Posterior vena cava (tissue), 2 donors: ENCODE measurements at regions of chr1 and their contacts with region 1.

Region 1: DNA sequence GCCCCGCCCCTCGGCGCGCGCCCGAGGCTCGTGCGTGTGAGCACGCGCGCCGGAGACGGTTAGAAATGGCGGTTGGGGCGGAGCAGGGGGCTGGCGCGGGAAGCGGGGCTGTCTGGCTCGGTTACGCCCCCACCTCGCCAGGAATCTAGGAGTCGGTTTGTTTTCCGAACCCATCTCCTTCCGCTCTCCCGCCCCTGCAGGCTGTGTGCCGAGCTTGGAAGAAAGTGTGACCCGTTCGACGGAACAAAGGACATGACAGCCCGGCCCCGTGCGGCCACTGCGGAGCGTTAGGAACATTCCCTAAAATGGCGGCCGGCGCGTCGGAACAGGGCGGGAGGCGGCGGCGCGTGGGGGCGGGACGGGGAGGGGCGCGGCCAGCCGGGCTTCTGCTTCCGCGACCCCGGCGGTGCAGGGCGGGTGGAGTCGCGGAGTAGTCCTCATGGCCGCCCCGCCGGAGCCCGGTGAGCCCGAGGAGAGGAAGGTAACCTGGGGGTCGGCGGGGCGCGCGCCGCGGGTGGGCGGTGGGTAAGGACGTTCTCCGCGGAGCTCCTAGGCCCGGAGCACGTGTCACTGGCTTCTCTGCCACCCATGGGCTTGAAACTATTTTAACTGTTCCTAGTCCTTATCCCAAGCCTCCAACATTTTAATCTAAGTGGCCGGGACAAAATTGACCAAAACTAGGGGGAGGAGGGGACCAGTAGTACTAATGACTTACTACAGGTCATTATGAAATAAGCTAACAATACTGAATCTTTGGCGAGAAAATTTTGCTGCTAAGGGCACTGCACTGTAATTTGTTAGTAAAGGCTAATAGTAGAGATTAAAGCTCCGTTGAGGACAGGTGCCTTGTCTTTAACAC is at the start of gene COX20:
- DNase-seq: peak; percentile 97
- total RNA-seq, gene COX20: 42.1 to 47.6 TPM

Region 2: DNA sequence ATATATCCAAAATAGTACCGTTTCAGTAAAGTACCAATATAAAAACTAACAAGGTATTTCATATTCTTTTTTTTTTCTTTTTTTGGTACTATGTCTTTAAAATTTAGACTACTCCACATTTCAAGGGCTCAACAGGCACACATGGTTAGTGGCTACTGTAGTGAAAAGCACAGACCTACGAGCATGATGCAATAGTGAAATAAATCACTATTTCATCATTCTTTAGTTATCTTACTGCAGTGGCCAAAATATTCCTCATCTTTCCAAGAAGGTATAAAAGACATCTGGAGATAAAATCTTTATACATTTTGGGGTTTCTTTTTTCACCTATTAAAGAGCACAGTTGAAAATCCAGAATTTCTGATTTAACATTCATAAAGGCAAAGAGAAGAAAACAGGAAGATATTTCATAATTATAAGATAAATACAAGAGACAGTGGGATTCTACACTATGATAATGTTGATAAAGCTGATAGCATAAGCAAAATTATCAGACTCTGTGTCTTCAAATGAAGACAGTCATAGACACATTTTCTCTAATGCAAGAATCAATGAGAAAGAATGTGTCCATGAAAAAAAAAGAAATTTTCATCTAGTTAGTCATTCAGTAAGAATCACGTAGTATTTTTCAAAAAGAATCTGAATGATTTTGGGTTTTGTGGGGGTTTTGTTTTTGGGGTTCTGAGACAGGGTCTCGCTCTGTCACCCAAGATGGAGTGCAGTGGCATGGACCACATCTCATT is 1622.3 kb before region 1 on chr1:
- intact Hi-C with region 1: no loop called
- DNase-seq: no peak

Region 3: DNA sequence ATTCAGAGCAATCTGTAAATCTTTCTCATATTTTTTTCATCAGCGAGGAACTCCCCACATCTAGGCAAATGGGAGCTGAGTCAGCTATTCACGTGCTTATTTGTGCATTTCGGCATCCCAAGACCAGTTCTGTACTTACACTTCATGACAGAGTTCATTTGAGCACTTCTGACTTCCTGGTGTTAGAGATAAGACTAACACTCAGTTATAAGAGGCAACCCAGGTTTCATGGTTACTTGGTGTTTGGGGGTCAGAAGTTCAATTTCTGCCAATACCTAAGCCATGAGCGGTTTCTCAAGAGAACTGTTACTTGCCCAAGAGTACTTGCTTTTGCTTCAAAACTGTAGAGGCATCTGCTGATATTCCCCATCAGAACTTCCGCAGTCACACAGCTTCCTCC is 206.7 kb before region 1 on chr1:
- intact Hi-C with region 1: no loop called
- DNase-seq: no peak

Region 4: GRCh38 chr1:244864253-244865027 is 28.9 kb after region 1 on chr1 and contains the start of gene HNRNPU:
- intact Hi-C with region 1: loop called in 1 of 2 experiments (anchors 2 kb)
- DNase-seq: peak; percentile 99
- total RNA-seq, gene HNRNPU: 186 to 214 TPM

Region 5: DNA sequence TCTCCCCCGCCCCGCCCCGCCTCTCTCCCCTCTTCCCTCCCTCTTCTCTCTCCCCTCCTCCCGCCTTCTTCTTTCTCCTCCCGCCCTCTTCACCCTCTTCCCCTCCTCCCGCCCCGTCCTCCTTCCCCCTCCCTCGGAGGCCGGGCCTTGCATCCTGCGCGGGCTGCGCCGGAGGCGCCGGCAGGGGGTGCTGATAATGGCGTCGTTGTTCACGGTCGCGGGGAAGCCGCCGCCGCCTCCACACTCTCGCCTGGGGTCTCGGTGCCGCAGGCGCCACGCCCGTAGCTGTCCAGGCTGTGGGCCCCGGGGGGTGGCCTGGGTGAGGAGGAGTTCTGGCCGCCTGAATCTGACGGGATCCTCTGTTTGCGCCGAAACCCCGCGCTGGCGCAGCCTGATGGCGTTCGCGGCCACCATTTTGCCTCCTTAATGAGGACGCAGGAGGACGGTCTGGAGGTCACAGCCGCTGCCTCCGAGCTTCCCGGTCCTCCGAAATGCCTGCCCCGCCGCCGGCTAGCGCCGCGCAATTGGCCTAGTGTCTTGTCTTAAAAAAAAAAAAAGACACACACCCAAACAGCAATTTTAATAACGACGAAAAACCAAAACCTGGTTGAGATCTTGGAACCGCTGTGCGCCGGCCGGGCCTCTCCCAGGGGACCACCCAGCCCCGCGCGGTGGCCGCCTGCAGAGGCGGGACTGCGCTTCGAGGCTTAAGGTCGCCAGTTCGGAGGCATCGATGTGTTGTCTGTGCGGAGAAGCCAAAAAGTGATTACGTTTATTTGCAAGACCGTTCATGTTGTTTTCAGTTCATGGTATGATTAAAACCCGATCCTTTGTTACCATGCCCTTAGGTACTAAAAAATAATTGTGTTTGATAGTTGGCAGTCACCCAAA is 135.4 kb after region 1 on chr1:
- intact Hi-C with region 1: loop called in 1 of 2 experiments (anchors 10 kb)
- DNase-seq: peak; percentile 98